ENCODE measurements at regions of chr10 and their contacts with region 1.

Region 1: GRCh38 chr10:30591249-30591670 is 38.3 kb downstream of the LYZL2 start:
- DNase-seq: no peak
- H3K4me3 ChIP-seq: no peak overlapping the region
- H3K27ac ChIP-seq: no peak overlapping the region
- H3K4me1 ChIP-seq: no peaks in the 10 kb centered on the region
- H3K27me3 ChIP-seq: peaks cover 0 to 3% of the 10 kb centered on the region in 2 donors
- CTCF ChIP-seq: peak; percentile 78 to 84

Region 2: DNA sequence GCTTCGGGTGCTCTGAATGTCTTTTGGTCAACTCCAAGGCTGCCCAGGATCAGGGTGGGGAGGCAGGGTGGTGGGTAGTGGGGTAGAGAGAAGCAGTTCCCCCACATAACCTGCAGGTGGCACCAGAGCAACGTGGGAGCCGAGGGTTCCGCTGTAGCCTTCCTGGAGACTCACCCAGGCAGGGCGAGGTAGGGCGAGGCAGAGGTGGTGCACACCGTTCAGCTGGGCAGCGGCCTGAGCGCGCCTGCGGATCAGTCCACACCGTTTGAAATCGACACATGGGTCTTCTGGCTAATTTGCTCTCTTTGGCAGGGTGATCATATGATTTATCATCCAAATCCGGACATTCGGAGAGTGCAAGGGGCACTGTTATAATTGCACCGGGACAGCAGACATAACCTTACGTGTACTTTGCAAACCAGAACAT is 198.7 kb before region 1 on chr10:
- intact Hi-C with region 1: loop called (anchors 2 kb)
- DNase-seq: peak; percentile 63 to 80
- H3K4me3 ChIP-seq: no peak overlapping the region
- H3K27ac ChIP-seq: no peak overlapping the region
- H3K4me1 ChIP-seq: peaks cover 0 to 5% (median 2%) of the 10 kb centered on the region in 4 donors
- H3K27me3 ChIP-seq: no peaks in the 10 kb centered on the region
- CTCF ChIP-seq: peak; percentile 89 to 97